Ovary (tissue), 10 donors: ENCODE measurements at regions of chr17 and their contacts with region 1.

Region 1: GRCh38 chr17:17237026-17237799 is at the start of gene FLCN:
- DNase-seq: peak; percentile 89 to 94 (median 91)
- H3K4me3 ChIP-seq: peak within 1 kb of the TSS; percentile 94
- H3K27ac ChIP-seq: peak within 1 kb of the TSS; percentile 95 to 96
- H3K4me1 ChIP-seq: peaks cover 4% of the 10 kb centered on the region
- H3K27me3 ChIP-seq: no peaks in the 10 kb centered on the region
- CTCF ChIP-seq: peak in 2 of 3 donors; percentile 27 to 37
- EP300 ChIP-seq: peak; percentile 20
- POLR2A ChIP-seq: peak; percentile 72
- total RNA-seq, gene FLCN: 27.9 to 55.7 (median 45.1) TPM

Region 2: DNA sequence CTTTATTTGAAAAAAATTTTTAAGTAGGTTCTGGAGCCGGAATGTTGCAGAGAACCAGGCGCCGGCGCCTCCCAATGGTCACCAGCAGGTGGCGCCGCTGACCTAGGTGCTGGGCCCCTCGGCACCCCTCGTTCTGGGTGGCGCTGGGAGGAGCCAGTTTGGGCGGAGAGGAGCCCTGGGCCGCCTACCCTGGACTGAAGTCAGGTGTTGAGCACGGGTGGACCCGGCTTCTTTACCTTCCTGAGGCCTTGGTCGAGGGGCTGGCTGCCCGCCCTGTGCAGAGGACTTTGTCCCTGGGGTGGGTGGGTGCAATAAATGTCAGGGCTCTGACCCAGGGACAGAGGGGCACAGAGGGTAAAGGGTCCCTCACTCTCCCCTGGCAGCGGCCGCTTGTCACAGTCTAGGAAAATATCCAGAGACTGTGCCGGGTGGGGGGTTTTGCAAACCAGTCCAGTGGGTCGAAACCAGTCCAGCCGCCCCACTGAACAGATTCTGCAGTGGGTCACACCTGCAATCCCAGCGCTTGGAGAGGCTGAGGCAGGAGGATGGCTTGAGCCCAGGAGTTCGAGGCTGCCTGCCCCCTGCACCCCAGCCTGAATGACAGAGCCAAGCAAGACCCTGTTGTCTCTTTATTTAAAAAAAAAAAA is 235.2 kb before region 1 on chr17:
- intact Hi-C with region 1: loop called in 1 of 4 experiments (anchors 10 kb)
- DNase-seq: peak; percentile 71 to 89 (median 83)
- H3K4me3 ChIP-seq: no peak overlapping the region
- H3K27ac ChIP-seq: no peak overlapping the region
- H3K4me1 ChIP-seq: peaks cover 2% of the 10 kb centered on the region
- H3K27me3 ChIP-seq: no peaks in the 10 kb centered on the region
- CTCF ChIP-seq: peak; percentile 86 to 97 (median 86)
- EP300 ChIP-seq: no peak
- POLR2A ChIP-seq: no peak

Region 3: DNA sequence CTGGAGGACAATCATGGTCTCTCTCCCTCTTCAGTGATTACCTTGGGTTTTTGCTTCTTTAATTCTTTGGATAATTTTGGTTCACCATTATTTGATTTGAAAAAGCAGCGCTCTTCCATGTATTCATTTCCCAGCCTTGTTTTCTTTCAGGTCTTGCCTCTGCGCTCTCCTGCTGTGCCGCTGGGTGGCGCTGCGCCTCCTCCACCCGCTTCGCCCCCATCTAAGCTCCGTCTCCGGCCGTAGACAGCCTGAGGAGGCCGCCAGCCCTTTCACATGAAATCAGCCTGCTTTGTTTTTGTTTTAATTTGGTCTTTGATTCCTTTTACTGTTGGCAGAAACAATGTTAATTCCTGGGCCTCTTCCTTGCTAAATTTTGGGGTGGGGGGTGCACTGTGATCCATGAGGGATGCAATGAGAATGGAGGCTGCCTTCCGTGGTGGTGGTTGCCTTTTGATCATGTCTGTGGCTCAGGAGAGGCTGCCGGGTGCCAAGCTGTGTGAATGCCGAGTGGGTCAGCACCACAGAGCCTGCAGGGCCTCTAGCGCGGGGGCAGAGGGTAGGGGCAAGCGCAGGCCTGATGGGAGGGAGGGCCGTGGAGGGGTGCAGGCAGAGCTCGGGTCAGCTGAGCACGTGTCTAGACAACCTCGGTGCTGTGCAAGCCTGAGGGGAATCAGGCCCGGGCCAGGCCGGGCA is 95.2 kb before region 1 on chr17:
- intact Hi-C with region 1: loop called in 1 of 4 experiments (anchors 10 kb)
- DNase-seq: peak; percentile 55 to 84 (median 64)
- H3K4me3 ChIP-seq: no peak overlapping the region
- H3K27ac ChIP-seq: peak overlapping the region in 1 of 2 donors; percentile 21
- H3K4me1 ChIP-seq: no peaks in the 10 kb centered on the region
- H3K27me3 ChIP-seq: no peaks in the 10 kb centered on the region
- CTCF ChIP-seq: peak; percentile 61 to 63 (median 62)
- EP300 ChIP-seq: no peak
- POLR2A ChIP-seq: no peak

Region 4: DNA sequence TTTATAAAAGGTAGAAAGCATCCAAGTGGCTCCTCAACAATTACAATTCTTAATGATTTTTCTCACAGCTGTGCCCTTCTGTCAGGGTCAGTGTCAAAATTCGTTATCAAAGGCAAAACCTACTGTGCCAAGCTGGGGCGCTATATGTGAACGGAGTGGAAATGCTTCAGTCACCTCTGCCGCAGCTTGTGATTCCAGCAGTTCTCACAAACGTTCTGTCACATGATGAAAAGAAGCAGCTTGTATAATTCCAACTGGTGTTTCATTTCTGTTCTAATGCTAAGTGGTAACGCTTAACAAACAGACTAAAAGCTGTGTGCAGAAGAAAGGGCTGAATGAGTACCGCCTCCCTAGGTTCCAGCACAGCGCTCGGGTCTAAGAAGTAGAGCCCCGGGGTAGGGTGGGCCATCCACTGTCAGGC is 45.2 kb before region 1 on chr17:
- intact Hi-C with region 1: no loop called
- DNase-seq: no peak
- H3K4me3 ChIP-seq: no peak overlapping the region
- H3K27ac ChIP-seq: peak overlapping the region; percentile 37 to 38
- H3K4me1 ChIP-seq: peaks cover 7% of the 10 kb centered on the region
- H3K27me3 ChIP-seq: no peaks in the 10 kb centered on the region
- CTCF ChIP-seq: no peak
- EP300 ChIP-seq: no peak
- POLR2A ChIP-seq: no peak

Region 5: DNA sequence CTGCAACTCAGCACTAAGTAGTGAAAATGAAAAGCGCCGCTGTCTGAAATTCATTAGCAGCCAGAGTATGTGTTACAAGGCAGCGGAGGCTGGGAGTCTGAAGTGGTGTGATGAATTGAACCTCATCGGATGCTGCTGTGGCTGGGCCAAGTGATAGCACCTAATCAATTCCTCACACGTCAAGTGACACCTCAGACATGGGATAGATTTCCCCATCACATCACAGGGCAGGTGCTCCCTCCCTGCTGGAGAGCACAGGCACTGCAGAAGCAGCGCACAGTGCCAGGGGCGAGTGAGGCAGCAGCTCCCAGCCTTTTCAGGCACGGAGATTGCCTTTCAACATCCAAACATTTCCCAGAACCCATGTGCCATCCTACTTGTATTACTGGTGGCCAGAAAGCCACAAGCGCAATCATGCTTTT is 767.7 kb after region 1 on chr17:
- intact Hi-C with region 1: no loop called
- DNase-seq: no peak
- H3K4me3 ChIP-seq: no peak overlapping the region
- H3K27ac ChIP-seq: no peak overlapping the region
- H3K4me1 ChIP-seq: no peaks in the 10 kb centered on the region
- H3K27me3 ChIP-seq: no peaks in the 10 kb centered on the region
- CTCF ChIP-seq: no peak
- EP300 ChIP-seq: no peak
- POLR2A ChIP-seq: no peak